Esophagus muscularis mucosa (tissue), 4 donors: ENCODE measurements at regions of chr4 and their contacts with region 1.

Region 1: DNA sequence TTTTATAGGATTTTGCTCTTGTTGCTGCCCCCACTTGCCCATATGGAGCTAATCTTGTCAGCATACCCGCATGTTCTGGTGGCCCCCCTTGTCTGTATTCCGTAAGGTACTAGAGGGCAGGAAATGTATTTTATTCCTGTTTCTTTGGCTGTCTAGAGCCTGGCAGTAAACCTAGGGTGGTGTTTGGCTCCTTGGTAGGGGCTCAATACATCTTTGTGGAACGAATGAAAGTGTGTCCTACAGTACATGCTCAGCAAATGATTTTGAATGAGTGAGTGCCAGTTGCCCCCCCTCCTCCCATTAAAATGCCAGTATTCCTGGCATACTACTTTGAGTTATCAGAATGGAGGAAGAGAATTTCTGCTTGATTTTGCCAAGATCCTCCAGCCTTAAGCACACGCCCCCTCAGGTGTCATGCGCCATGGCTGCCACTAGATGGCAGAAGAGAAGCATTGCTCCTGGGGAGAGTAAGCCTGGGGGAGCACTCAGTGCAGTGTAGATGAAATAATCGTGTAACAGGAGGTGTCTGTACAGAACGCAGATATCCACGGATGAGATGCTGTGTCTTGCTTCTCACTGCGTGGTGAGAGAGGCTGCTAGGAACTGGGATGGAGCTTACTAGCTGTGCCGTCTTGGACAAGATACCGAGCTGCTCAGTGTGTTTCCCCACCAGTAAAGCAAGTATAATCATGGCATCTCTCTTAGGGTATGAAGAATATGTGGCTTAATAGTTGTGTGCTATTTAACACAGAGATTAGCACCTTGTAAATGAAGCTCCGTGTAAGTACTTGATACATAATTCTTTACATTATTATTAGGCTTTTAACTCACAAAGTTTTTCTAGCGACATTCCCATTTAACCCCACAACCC is 17.2 kb upstream of the RNF212 start:
- DNase-seq: peak; percentile 95
- H3K4me3 ChIP-seq: no peak overlapping the region
- H3K27ac ChIP-seq: no peak overlapping the region
- H3K4me1 ChIP-seq: peaks cover 0 to 10% (median 4%) of the 10 kb centered on the region in 4 donors
- H3K27me3 ChIP-seq: no peaks in the 10 kb centered on the region
- CTCF ChIP-seq: peak in 2 of 3 experiments; percentile 97 to 98
- EP300 ChIP-seq: no peak
- POLR2A ChIP-seq: no peak

Region 2: DNA sequence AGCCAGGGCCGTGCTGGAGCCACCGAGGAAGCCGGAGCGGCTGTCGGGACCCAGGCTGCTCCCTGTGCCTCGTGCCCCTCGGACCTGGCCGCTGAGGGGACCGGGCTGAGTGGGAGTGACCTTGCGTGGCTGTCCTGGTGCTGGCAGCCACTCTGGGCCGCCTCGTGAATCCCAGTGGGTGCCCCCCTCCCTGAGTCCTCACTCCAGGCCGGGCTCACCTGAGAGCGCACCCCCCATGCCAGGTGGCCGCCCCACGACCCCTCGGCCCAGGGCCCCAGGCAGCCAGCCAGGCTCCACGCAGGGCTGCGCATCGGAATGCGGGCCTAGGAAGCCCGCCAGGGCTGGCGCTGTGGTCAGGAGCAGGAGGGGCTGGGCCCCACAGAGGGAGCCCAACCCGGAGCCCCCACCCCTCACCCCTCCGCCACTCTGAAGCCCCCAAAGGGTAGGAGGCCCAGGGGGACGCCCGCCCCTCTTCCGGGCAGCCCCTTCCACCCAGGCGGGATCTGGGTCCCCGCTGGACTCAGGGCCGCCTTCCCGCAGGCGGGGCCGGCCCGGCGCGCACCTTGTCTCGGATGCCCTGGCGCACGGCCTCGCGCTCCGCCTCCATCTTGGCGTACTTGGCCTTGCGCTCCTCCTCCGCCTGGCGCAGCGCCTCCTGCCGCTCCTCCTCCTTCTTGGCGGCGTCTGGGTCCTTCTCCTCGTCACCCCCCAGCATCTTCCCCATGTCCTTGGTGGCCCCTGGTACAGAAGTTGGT is 338.5 kb before region 1 on chr4:
- intact Hi-C with region 1: no loop called
- DNase-seq: no peak
- H3K4me3 ChIP-seq: peak overlapping the region; percentile 38 to 55 (median 42)
- H3K27ac ChIP-seq: peak overlapping the region in 1 of 4 donors; percentile 6
- H3K4me1 ChIP-seq: peaks cover 18 to 49% (median 42%) of the 10 kb centered on the region in 4 donors
- H3K27me3 ChIP-seq: peaks cover 8 to 96% (median 35%) of the 10 kb centered on the region in 4 donors
- CTCF ChIP-seq: no peak
- EP300 ChIP-seq: no peak
- POLR2A ChIP-seq: no peak

Region 3: DNA sequence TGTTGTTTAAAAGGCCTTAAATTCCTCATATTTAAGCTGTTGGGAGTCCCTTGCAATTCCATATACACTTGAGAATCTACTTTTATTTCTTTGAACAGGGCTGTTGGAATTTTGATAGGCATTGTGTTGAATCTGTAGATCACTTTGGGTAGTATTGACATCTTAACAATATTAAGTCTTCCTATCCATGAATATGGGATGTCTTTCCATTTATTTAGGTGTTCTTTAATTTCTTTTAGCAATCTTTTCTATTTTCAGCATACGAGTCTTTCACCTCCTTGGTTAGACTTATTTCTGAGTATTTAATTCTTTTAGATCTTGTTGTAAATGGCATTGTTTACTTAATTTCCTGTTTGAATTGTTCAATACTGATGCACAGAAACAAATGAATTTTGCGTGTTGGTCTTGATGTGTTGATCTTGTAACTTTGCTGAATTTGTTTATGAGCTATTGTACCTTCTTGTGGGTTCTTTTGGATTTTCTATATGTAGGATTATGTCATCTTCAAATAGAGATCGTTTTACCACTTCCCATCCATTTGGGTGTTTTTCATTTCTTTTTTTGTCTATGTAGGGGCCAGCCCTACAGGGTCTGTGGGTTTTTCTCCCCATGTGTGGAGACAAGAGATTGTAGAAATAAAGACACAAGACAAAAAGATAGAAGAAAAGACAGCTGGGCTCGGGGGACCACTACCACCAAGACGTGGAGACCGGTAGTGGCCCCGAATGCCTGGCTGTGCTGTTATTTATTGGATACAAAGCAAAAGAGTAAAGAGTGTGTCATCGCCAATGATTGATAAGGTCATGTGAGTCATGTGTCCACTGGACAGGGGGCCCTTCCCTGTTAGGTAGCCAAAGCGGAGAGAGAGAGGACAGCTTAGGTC is 136.6 kb after region 1 on chr4:
- intact Hi-C with region 1: loop called (anchors 5 kb)
- DNase-seq: no peak
- H3K4me3 ChIP-seq: no peak overlapping the region
- H3K27ac ChIP-seq: no peak overlapping the region
- H3K4me1 ChIP-seq: no peaks in the 10 kb centered on the region
- H3K27me3 ChIP-seq: no peaks in the 10 kb centered on the region
- CTCF ChIP-seq: no peak
- EP300 ChIP-seq: no peak
- POLR2A ChIP-seq: no peak

Region 4: GRCh38 chr4:1289207-1290164 is 158.9 kb after region 1 on chr4 and contains the start of gene MAEA:
- intact Hi-C with region 1: no loop called
- DNase-seq: peak; percentile 99
- H3K4me3 ChIP-seq: peak within 1 kb of the TSS; percentile 84 to 99 (median 96)
- H3K27ac ChIP-seq: peak within 1 kb of the TSS; percentile 83 to 96 (median 92)
- H3K4me1 ChIP-seq: peaks cover 45 to 50% (median 49%) of the 10 kb centered on the region in 4 donors
- H3K27me3 ChIP-seq: no peaks in the 10 kb centered on the region
- CTCF ChIP-seq: no peak
- EP300 ChIP-seq: no peak
- POLR2A ChIP-seq: peak; percentile 20
- total RNA-seq, gene MAEA: 54.5 to 63.1 (median 59.8) TPM